ENCODE measurements at regions of chr6 and their contacts with region 1.

Region 1: GRCh38 chr6:125804264-125804663 is 13.5 kb downstream of the NCOA7 start:
- DNase-seq: no peak
- H3K4me3 ChIP-seq: no peak overlapping the region
- H3K27ac ChIP-seq: no peak overlapping the region
- H3K4me1 ChIP-seq: peaks cover 18% of the 10 kb centered on the region
- H3K27me3 ChIP-seq: no peaks in the 10 kb centered on the region
- CTCF ChIP-seq: no peak
- POLR2A ChIP-seq: no peak

Region 2: GRCh38 chr6:125325586-125325985 is 478.7 kb before region 1 on chr6:
- intact Hi-C with region 1: no loop called
- DNase-seq: no peak
- H3K4me3 ChIP-seq: no peak overlapping the region
- H3K27ac ChIP-seq: no peak overlapping the region
- H3K4me1 ChIP-seq: no peaks in the 10 kb centered on the region
- H3K27me3 ChIP-seq: no peaks in the 10 kb centered on the region
- CTCF ChIP-seq: no peak
- POLR2A ChIP-seq: no peak

Region 3: GRCh38 chr6:125858427-125859320 is 54.4 kb after region 1 on chr6:
- intact Hi-C with region 1: loop called (anchors 10 kb)
- DNase-seq: no peak
- H3K4me3 ChIP-seq: no peak overlapping the region
- H3K27ac ChIP-seq: no peak overlapping the region
- H3K4me1 ChIP-seq: no peaks in the 10 kb centered on the region
- H3K27me3 ChIP-seq: no peaks in the 10 kb centered on the region
- CTCF ChIP-seq: peak; percentile 32 to 69 (median 66)
- POLR2A ChIP-seq: no peak

Measured in vagina (tissue), 2 donors.